ENCODE measurements at regions of chrX and their contacts with region 1.

Region 1: DNA sequence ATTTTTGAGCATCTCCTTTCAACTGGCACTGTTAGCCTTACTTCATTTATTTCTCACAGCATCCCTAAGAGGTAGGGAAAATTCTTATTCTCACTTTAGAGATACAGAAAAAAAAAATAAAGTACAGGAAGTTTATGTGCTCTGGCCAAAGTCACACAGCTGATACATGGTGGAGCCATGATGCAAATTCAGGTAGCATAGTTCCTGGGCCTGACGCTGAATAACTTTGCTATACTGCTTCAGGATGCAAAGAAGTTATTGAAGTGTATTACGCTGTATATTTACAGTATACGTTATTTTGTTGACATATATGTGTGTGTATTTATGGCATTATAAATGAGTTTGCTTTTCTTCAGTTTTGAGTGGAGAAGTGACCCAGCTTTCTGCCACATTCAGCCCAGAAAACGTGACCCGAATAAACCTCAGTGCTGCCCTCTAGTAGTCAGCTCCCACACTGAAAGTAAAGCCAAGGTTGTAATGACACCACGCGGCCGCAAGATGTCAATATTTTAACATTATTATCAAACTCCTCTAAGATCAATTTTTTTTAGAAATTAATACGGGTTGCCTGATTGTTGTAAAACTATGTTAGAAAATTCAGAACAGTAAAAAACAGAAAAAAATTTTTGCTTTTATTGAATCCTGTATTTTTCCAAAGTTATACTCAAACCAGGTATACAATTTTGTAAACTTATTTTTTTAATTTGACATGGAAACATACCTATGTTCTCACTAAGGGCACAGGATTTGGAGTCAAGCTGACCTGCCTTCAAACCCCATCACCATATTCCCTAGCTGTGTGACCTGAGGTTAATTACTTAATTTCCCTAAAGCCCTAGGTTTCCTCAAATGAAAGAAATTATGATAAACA is 3.8 kb upstream of the GUCY2F start:
- DNase-seq: peak; percentile 26 to 77 (median 44)
- ATAC-seq: peak; percentile 66 to 96 (median 88)
- H3K4me3 ChIP-seq: no peak overlapping the region
- H3K27ac ChIP-seq: no peak overlapping the region
- H3K4me1 ChIP-seq: no peaks in the 10 kb centered on the region
- H3K27me3 ChIP-seq: peaks cover 0 to 27% (median 3%) of the 10 kb centered on the region in 4 donors
- CTCF ChIP-seq: peak; percentile 93 to 97 (median 96)

Region 2: GRCh38 chrX:109635176-109635575 is 149.5 kb after region 1 on chrX:
- intact Hi-C with region 1: loop called in 2 of 3 experiments (anchors 5 to 10 kb)
- DNase-seq: peak in 1 of 6 donors; percentile 8
- ATAC-seq: peak in 3 of 4 donors; percentile 41 to 57 (median 47)
- H3K4me3 ChIP-seq: no peak overlapping the region
- H3K27ac ChIP-seq: no peak overlapping the region
- H3K4me1 ChIP-seq: no peaks in the 10 kb centered on the region
- H3K27me3 ChIP-seq: peaks cover 0 to 6% (median 2%) of the 10 kb centered on the region in 4 donors
- CTCF ChIP-seq: peak; percentile 10 to 41 (median 32)